Right ventricle myocardium inferior (tissue), 1 donor: ENCODE measurements at regions of chr19 and their contacts with region 1.

Region 1: DNA sequence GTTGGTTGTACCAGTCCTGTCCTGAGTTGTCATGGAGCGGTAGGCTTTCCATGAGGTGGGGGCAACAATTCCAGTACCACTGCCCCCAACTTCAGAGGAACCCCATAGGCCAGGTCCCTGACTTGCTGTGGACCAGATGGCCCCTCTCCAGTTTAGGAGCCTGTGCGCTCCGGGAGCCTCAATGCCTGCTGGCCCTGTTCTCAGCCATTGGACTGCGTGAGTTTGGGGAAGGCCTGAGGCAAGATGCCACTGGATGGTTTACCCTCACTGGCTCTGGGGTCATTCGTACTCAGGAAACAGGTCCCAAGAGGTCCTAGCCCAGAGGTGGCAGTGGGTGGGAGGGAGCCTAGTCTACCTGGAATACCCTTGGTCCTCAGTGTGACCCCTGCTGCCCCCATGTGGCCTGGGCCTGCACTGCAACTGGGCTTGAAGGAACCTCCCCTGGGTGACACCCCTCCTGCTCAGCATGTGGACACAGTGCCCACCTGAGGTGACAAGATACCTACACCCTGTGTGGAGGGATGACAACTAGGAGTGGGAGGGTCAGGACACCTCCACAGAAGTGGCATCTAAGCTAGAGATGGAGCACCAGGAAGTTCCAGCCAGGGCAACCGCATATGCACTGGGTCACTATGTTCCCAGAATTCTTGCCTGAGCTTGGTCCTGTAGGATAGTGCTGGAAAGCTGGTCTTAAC is 6.0 kb upstream of the PRR19 start:
- DNase-seq: peak; percentile 89
- ATAC-seq: peak; percentile 77

Region 2: DNA sequence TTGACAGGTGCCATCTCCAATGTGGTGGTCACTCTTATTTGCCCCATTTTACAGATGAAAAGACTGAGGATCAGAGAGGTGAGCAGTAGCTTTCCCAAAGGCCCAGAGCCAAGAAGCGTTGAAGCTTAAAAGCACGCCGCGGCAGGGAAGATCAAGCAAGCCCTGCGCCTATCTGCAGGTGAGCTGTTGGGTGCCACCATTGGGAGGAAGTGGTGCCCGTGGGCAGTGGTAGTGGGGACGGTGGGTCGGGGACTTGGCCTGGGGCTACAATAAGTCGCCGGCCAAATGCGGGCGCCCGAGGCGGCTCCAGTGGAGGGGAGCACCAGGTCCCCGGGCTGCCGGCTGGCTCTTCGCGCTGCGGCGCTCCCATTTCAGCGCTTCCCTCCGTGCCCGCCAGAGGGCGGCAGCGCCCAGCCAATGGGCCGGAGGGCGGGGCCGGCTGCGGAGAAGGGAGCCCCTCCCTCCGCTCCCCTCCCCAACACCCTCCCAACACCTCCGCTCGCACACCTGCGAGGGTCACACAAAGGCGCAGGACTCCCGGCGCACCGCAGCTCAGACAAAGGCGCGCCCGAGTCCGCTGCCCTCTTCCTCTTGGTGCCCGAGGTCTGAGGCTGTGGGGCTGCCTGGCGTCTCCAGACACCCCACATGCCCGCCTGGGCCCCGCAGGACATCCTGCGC is 163.0 kb before region 1 on chr19:
- intact Hi-C with region 1: loop called (anchors 2 kb)
- DNase-seq: peak; percentile 90
- ATAC-seq: peak; percentile 65

Region 3: DNA sequence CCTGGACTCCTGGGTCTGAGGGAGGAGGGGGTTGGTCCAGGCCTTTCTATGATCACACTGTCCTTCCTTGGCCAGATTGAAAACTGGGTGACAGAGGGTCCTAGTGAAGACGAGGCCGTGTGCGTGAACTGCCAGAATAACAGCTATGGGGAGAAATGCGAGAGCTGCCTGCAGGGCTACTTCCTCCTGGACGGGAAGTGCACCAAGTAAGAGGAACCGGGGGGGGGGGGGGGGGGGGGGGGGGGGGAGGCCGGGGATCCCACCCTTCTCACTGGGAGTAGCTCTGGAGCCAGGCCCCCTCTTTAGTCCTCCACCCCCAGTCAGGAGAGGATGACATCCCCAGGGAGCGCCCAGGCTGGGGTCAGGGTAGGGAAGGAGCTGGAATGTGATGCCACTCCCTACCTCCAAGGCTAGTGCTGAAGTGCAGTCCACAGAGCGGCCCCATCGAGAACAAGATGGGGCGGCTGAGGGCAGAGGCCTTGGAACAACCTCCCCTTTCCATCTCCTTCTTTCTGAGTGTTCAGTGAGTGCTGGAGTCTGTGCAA is 74.7 kb after region 1 on chr19:
- intact Hi-C with region 1: no loop called
- DNase-seq: peak; percentile 54
- ATAC-seq: no peak